Activated CD4-positive, alpha-beta T cell treated with anti-CD3 and anti-CD28 coated beads, Interleukin-2, amount 10 ng/mL, durations not matched to agents 7 days and 5 days (primary cell): ENCODE measurements at regions of chr6 and their contacts with region 1.

Region 1: DNA sequence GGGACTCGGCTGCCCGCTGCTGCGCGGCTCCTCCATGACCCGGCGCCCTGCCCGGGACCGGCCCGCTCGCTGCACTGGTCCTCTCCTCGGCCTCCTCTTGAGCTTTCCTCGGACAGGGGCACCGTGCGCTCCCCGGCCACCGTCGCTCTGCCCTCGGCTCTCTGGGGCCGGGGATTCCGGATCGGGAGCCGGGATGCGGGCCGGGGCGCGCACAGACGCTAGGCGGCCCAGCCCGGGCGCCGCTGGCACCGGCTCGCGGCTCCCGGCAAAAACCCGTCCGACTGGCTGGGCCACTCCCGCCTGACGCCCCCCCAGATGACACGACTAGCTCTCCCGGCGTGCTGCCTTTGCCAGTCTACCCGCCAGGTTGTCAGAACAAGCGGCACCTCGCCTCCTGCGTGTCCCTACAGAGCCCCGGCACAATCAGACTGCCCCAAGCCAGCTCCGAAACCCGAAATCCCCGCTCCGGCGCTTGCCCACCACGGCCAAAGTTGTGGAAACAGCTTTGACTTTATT is 2.1 kb downstream of the TFAP2A start:
- DNase-seq: no peak
- H3K4me3 Mint-ChIP-seq: peak overlapping the region; percentile 73
- H3K27ac Mint-ChIP-seq: peak overlapping the region; percentile 62
- H3K4me1 Mint-ChIP-seq: peaks cover 37% of the 10 kb centered on the region
- H3K27me3 Mint-ChIP-seq: peaks cover 90% of the 10 kb centered on the region

Region 2: DNA sequence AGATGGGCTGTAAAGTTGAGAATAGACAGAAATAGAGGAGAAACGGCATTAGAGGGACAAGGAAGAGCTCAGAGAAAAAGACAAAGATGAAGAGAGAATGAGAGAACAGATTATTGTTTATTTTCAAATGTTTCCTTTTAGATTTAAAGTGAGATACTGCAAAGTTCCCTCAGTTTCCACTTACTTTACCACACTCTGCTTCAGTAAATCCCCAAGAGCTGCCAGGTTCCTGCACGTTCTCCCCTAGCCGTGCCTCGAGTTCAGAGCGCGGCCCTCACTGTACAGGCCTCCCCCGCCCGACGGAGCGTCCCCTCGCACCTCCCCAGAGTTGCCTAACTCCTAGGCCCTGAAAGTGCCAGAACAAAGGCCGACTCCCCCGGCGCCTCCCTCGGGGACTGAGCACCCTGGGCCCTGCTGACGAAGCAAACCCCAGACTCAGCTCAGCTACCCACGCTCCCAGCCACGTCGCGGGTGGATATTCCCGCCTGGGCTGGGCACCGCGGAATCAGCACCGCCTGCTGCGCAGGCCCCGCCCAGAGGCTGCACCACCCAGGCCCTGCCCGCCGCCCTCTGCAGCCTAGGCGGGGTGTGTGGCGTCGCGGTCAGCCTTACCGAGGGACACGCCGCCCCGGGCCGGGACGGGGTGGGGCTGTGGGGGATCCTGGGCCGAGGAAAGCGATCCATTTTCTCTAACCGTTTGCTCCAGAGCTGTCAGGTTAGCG is 29.6 kb before region 1 on chr6:
- CTCF ChIA-PET with region 1: interaction called, 31 read pairs
- POLR2A ChIA-PET with region 1: no interaction called
- DNase-seq: no peak
- H3K4me3 Mint-ChIP-seq: peak overlapping the region; percentile 23
- H3K27ac Mint-ChIP-seq: peak overlapping the region; percentile 69
- H3K4me1 Mint-ChIP-seq: peaks cover 8% of the 10 kb centered on the region
- H3K27me3 Mint-ChIP-seq: peaks cover 71% of the 10 kb centered on the region

Region 3: DNA sequence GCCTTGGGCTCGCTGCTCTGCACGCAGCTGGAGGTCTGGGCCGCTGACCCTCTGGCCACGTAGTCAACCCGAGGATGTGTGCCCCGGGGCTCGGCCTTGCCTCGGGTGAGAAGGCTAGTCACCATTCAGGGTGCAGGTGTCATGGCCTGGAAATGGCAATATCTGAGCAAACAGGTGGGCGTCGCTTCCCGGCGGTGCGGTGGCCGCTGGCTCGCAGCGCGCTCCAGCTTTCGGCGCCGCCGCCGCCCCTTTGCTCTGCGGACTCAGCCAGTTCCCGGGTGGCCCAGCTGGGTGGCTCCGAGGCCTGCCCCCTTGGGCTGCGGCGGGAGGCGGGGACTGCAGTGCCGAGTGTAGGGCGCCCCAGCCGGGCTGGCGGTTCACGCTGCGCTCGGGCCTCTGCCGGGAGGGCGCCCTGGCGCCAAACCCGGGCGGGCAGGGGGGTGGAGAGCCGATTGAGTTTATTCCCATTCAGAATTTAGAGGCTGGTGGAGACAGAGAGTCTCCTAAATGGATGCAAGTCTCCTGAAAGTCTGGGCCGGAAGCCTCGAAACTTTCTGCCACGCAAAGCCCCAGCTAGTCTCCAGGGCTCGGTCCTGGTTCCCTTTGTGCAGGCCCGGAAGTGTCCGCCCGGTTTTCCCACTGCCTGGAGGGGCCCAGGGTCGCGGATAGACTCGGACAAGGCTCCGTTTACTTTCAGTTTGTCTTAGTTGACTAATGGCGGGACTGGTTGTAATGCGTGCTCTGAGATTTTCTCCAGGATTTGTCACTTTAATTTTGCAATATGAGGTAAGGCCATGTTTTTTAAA is 13.4 kb after region 1 on chr6:
- CTCF ChIA-PET with region 1: interaction called, 17 read pairs
- POLR2A ChIA-PET with region 1: no interaction called
- DNase-seq: no peak
- H3K4me3 Mint-ChIP-seq: peak overlapping the region; percentile 53
- H3K27ac Mint-ChIP-seq: peak overlapping the region; percentile 19
- H3K4me1 Mint-ChIP-seq: peaks cover 18% of the 10 kb centered on the region
- H3K27me3 Mint-ChIP-seq: peaks cover 85% of the 10 kb centered on the region